ENCODE measurements at regions of chr18 and their contacts with region 1.

Region 1: GRCh38 chr18:24947521-24948305 is 404.3 kb downstream of the ZNF521 start:
- DNase-seq: no peak
- ATAC-seq: peak; percentile 91

Region 2: DNA sequence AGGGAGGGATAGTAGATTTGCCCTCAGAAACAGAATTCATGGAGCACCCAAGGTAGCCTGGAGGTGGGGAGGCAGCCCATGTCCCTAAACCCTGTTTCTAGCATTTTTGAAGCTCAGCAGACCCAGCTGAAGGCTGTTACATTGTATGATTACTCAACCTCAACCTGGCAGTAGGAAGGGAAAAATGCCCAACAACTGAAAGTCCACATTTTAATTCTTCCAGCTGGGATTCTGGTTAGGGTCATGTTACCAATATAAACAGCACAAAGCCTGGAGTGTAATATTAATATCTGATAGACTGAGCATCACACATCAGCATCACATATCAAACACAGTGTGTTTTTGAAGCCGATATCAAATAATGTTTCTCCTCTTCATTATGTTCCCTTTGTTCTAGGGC is 50.3 kb before region 1 on chr18:
- intact Hi-C with region 1: no loop called
- DNase-seq: no peak
- ATAC-seq: no peak

Region 3: GRCh38 chr18:24974431-24974830 is 26.7 kb after region 1 on chr18:
- intact Hi-C with region 1: no loop called
- DNase-seq: no peak
- ATAC-seq: no peak

Region 4: GRCh38 chr18:24987303-24988252 is 39.9 kb after region 1 on chr18:
- intact Hi-C with region 1: loop called (anchors 5 kb)
- DNase-seq: no peak
- ATAC-seq: peak; percentile 78